KBM-7 (cell line): ENCODE measurements at regions of chr6 and their contacts with region 1.

Region 1: GRCh38 chr6:72411872-72412708 is 209.8 kb upstream of the KCNQ5 start:
- DNase-seq: peak; percentile 97

Region 2: GRCh38 chr6:72580281-72580940 is 168.3 kb after region 1 on chr6:
- in situ Hi-C with region 1: loop called (anchors 25 kb)
- DNase-seq: peak; percentile 77

Region 3: GRCh38 chr6:72720464-72720863 is 308.4 kb after region 1 on chr6:
- in situ Hi-C with region 1: no loop called
- DNase-seq: no peak

Region 4: GRCh38 chr6:73180763-73181619 is 768.9 kb after region 1 on chr6:
- in situ Hi-C with region 1: loop called (anchors 25 kb)
- DNase-seq: peak; percentile 83